Activated CD4-positive, alpha-beta T cell treated with anti-CD3 and anti-CD28 coated beads, Interleukin-2, amount 10 ng/mL, durations not matched to agents 24 days and 14 days (primary cell): ENCODE measurements at regions of chr6 and their contacts with region 1.

Region 1: GRCh38 chr6:155050311-155050710 is 55.2 kb downstream of the TIAM2 start:
- DNase-seq: peak; percentile 82
- H3K4me3 Mint-ChIP-seq: peak overlapping the region; percentile 65
- H3K27ac Mint-ChIP-seq: peak overlapping the region; percentile 95
- H3K4me1 Mint-ChIP-seq: peaks cover 36% of the 10 kb centered on the region
- H3K27me3 Mint-ChIP-seq: no peaks in the 10 kb centered on the region

Region 2: DNA sequence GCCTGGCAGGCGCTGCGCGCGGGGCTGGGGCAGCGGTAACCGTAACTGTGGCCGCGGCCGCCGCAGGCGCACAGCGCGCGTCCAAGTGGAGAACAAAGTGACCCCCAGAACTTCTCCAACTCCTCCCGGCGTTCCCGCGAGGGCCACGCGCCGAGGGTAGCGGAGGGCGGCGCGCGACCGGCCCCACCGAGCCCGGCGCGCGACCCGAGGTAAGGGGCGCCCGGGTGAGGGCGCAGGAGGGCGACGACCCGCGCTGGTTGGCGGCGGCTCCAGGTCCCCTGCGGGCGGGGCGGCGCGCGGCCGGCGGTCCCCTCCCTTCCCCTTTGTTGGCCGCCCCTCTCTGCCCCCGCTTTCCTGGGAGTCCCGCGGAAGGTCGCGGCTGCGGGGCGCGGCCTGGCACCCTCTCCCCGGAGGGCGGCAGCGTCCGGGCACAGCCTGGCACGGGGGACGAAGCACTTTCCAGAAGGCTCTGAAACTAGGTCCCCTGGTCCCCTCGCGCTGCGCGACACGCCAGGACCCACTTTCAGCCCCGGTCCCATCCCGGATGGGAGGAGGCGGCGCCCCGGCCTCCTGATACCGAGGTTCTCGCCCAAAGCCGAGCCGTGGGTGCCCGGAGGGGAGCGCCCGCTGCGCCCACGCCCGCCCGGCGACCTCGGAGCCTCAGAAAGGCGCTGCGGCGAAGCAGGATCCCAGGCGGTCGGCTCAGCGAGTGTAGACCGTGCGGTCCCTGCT is 54.9 kb before region 1 on chr6 and contains the start of gene TIAM2:
- intact Hi-C with region 1: loop called (anchors 2 kb)
- DNase-seq: peak; percentile 76
- H3K4me3 Mint-ChIP-seq: peak within 1 kb of the TSS; percentile 68
- H3K27ac Mint-ChIP-seq: peak within 1 kb of the TSS; percentile 64
- H3K4me1 Mint-ChIP-seq: peaks cover 15% of the 10 kb centered on the region
- H3K27me3 Mint-ChIP-seq: peaks cover 24% of the 10 kb centered on the region
- total RNA-seq, gene TIAM2: 86.9 and 91.9 TPM in 2 replicates

Region 3: GRCh38 chr6:155026022-155026726 is 24.1 kb before region 1 on chr6:
- intact Hi-C with region 1: no loop called
- DNase-seq: no peak
- H3K4me3 Mint-ChIP-seq: no peak overlapping the region
- H3K27ac Mint-ChIP-seq: no peak overlapping the region
- H3K4me1 Mint-ChIP-seq: peaks cover 11% of the 10 kb centered on the region
- H3K27me3 Mint-ChIP-seq: peaks cover 3% of the 10 kb centered on the region

Region 4: GRCh38 chr6:155079985-155080452 is 29.7 kb after region 1 on chr6:
- intact Hi-C with region 1: loop called (anchors 2 kb)
- DNase-seq: no peak
- H3K4me3 Mint-ChIP-seq: peak overlapping the region; percentile 22
- H3K27ac Mint-ChIP-seq: peak overlapping the region; percentile 85
- H3K4me1 Mint-ChIP-seq: peaks cover 31% of the 10 kb centered on the region
- H3K27me3 Mint-ChIP-seq: no peaks in the 10 kb centered on the region

Region 5: GRCh38 chr6:155115893-155116570 is 65.7 kb after region 1 on chr6:
- intact Hi-C with region 1: loop called (anchors 1 kb)
- DNase-seq: no peak
- H3K4me3 Mint-ChIP-seq: peak overlapping the region; percentile 47
- H3K27ac Mint-ChIP-seq: peak overlapping the region; percentile 86
- H3K4me1 Mint-ChIP-seq: peaks cover 31% of the 10 kb centered on the region
- H3K27me3 Mint-ChIP-seq: no peaks in the 10 kb centered on the region

Region 6: DNA sequence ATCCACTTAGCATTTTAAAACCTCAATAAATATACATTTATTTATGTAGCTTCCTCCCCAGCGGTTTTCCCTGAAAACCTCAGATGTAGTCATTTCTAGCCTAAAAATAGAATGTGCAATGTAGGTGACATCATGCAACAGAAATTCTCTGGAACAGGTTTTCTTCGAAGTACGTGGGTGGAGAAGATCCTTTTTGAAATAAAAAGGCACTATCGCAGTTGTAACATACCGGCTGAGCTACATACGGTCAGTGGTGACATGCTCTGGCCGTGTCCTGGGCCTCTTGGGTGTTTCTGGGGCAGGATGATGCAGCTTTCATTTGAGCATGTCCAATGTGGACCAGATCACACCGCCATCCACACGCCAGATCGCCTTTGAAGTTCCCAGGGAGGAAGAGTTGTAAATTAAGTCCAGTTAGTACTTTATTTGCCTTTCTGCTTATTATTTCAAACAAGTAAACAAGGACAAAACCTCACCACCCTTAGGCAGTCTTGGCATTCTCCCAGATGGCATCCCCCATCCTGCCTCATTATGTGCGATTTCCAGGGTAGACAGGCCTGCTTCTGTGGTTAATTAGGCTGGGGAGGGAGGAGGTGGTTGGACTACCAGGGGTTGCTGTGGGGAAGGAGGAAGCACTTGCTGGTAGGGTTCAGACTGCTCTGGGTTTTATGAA is 104.0 kb after region 1 on chr6:
- intact Hi-C with region 1: loop called (anchors 1 kb)
- DNase-seq: peak; percentile 86
- H3K4me3 Mint-ChIP-seq: peak overlapping the region; percentile 53
- H3K27ac Mint-ChIP-seq: peak overlapping the region; percentile 88
- H3K4me1 Mint-ChIP-seq: peaks cover 73% of the 10 kb centered on the region
- H3K27me3 Mint-ChIP-seq: no peaks in the 10 kb centered on the region

Region 7: DNA sequence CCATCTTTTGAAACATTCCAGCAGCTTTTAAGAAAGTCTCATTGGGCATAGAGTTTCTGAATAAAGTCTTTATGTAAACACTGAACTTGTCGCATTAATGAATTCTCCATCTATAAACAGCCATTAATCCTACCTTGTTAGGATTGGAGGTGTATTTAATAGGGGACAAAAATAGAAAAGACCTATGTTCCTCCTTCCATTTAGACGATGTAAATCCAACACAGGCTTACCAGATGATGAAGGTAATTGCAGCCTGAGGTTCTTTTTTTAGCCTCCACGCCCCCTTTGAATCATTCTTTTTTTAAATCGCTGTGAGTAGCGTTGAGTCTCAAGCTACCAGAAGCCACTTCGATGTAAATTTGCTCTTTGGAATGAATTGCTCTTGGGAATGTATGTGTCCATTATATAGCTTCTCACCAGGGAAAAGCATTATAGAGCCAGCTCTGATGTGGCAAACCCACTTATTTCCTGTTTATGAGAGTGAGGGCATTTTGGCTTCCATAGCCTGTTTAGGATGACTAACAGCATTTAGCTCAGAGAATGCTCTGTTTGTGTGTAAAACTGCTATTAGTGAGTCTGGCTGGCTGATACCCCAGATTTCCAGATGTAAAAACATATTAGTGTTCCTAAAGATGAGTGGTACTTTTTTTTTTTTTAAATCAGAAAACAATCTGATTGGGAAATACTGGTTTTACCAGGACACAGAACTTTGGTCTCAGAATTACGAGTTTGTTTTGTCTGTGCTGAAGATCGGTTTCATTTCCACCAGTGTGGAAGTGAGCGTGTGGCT is 138.6 kb after region 1 on chr6:
- intact Hi-C with region 1: loop called (anchors 1 kb)
- DNase-seq: no peak
- H3K4me3 Mint-ChIP-seq: peak overlapping the region; percentile 16
- H3K27ac Mint-ChIP-seq: peak overlapping the region; percentile 91
- H3K4me1 Mint-ChIP-seq: peaks cover 43% of the 10 kb centered on the region
- H3K27me3 Mint-ChIP-seq: no peaks in the 10 kb centered on the region